ENCODE measurements at regions of chr18 and their contacts with region 1.

Region 1: DNA sequence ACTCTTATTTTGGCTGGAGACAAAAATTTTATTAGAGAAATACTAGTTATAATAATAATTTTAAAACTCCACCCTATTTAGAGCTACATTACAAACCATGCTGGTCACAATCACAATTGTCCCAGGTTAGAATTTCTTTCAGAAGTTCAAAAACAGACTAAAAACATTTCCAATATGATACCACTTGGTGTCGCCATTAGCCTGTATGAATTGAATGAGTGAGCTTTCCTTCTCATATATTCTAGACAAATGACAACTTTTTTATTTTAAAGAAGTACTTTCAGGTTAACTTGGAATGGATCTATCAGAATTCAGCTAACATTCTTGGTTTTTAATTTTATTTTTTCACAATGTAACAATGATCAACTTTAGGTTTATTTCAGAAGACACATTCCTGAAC is 48.0 kb downstream of the SERPINB8 start:
- DNase-seq: no peak
- ATAC-seq: no peak

Region 2: DNA sequence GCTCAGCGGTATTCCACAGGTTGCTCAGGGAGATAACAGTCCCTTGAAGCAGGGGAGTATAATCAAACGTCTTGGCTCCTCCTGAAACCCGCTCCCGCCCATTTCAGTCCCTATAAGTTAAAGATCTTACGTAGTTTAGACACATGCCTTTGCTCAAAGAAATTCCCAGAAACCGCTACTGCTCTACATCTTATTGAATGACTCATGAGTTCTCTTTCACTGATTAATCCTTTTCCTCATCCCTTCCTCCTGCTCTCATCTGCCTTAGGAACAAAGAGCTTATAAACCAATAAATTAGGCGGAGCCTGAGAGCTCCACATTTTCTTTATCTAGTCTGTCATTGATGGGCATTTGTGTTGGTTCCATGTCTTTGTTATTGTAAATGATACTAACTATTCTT is 369.6 kb before region 1 on chr18:
- intact Hi-C with region 1: no loop called
- DNase-seq: no peak
- ATAC-seq: no peak

Region 3: GRCh38 chr18:63949068-63949737 is 68.7 kb before region 1 on chr18 and contains the start of gene HMSD:
- intact Hi-C with region 1: no loop called
- DNase-seq: peak; percentile 81
- ATAC-seq: peak; percentile 90
- total RNA-seq, gene HMSD: not detected

Region 4: GRCh38 chr18:64330161-64330560 is 312.3 kb after region 1 on chr18:
- intact Hi-C with region 1: loop called (anchors 10 kb)
- DNase-seq: no peak
- ATAC-seq: no peak

Region 5: DNA sequence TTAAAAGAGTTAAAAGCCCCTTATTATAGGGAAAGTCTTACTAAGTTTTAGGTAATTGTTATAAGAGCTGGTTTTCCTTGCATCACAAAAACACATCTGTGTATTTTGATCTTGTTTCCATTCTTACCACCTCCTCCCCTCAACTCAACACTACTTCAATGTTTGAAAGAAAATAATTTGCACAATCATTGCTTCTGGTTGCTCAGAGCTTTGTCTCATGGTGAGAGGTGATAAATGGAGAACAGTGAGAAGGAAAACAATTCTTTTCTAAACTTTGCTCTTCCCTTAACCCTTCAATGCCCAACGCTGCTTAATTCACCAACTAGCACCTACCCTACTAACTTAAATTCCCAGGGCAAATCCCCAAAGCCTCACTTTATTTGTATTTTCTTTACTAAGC is 399.1 kb after region 1 on chr18:
- intact Hi-C with region 1: loop called (anchors 10 kb)
- DNase-seq: no peak
- ATAC-seq: no peak

Region 6: DNA sequence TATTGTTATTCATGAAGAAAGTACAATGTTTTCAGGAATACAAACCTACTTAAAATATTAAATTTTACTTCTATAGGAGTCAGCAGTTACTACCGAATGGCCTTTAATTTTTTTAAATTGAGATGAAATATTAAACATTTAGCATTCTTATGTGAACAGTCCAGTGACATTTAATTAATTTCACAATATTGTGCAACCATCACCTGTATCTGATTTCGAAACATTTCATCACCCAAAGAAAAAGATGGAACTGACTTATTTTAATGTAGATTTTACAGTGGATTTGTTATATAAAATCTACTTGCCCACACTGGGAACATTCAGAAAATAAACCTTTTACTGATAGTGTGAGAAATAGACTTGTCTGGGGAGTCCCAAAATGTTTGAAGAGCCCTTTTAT is 716.2 kb after region 1 on chr18:
- intact Hi-C with region 1: no loop called
- DNase-seq: no peak
- ATAC-seq: no peak

Measured in Right ventricle myocardium inferior (tissue), 1 donor.